ENCODE measurements at regions of chr22 and their contacts with region 1.

Region 1: GRCh38 chr22:40396882-40397281 is 26.5 kb downstream of the SGSM3 start:
- DNase-seq: peak; percentile 89 to 99
- H3K4me3 ChIP-seq: no peak overlapping the region; the same call in 1 of the 2 replicates
- H3K27ac ChIP-seq: peak overlapping the region; percentile 88
- H3K4me1 ChIP-seq: peaks cover 41% of the 10 kb centered on the region
- H3K27me3 ChIP-seq: no peaks in the 10 kb centered on the region
- CTCF ChIP-seq: no peak

Region 2: GRCh38 chr22:40368016-40368415 is 28.9 kb before region 1 on chr22:
- CTCF ChIA-PET with region 1: no interaction called
- POLR2A ChIA-PET with region 1: no interaction called
- intact Hi-C with region 1: loop called (anchors 2 kb)
- DNase-seq: no peak
- H3K4me3 ChIP-seq: no peak overlapping the region
- H3K27ac ChIP-seq: 0 out of 2 replicates have a peak overlapping the region, but pooled peaks have one; percentile 33
- H3K4me1 ChIP-seq: peaks cover 11% of the 10 kb centered on the region; the same call in 1 of the 2 replicates
- H3K27me3 ChIP-seq: no peaks in the 10 kb centered on the region
- CTCF ChIP-seq: no peak

Region 3: DNA sequence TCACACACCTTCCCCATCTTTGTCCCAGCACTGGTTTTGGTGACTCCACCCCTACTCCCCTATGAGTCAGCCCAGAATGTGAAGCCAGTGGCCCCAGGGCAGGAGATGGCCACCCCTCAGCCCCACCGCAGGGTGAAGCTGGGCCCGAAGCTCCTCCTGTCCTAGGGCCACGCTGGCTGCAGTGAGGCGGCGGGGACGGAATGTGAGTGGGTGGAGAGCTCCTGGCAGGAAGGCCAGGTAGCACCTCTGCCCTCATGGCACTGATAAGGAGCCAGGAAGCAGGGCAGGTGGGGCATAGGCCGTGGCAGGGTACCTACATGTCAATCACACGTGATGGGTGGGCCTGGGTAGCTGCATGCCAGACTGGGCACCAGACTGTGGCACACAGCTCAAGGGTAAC is 13.4 kb after region 1 on chr22:
- CTCF ChIA-PET with region 1: interaction called, 3 read pairs
- POLR2A ChIA-PET with region 1: interaction called, 17 read pairs
- intact Hi-C with region 1: no loop called
- DNase-seq: peak; percentile 67 to 81
- H3K4me3 ChIP-seq: no peak overlapping the region
- H3K27ac ChIP-seq: peak overlapping the region; percentile 22; the same call in 1 of the 2 replicates
- H3K4me1 ChIP-seq: peaks cover 13% of the 10 kb centered on the region
- H3K27me3 ChIP-seq: no peaks in the 10 kb centered on the region
- CTCF ChIP-seq: no peak

Region 4: DNA sequence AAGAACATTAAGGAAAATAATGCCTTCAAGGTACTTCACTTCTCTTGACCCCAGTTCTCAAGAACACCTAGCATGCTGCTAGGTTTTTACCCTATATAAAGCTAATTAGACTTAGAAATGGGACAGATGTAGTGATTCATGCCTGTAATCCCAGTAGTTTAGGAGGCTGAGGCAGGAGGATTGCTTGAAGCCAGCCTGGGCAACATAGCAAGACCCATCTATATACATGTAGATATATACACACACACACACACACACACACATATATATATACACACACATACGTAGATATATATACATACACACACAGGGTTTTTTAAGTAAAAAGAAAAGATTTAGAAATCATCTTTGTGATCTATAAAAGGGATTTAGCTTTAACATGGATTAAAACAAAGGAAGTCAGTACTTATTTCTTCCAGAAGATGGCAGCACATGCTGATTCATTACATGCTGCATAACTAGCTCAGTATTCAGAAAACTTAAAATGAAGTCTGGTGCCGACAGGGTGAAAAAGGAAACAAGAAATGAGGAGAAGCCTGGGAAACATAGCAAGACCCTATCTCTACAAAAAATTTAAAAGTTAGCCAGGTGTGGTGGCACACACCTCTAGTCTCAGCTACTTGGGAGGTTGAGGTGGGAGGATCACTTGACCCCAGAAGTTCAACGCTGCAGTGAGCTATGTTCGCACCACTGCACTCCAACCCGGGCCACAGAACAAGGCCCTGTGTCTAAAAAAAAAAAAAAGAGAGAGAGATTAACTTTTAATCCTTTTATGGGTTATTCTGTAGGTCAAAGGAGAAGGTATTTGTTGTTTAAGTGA is 525.8 kb after region 1 on chr22:
- CTCF ChIA-PET with region 1: interaction called, 10 read pairs
- POLR2A ChIA-PET with region 1: no interaction called
- intact Hi-C with region 1: no loop called
- DNase-seq: peak in 1 of 2 experiments; percentile 56
- H3K4me3 ChIP-seq: no peak overlapping the region
- H3K27ac ChIP-seq: no peak overlapping the region
- H3K4me1 ChIP-seq: no peaks in the 10 kb centered on the region
- H3K27me3 ChIP-seq: no peaks in the 10 kb centered on the region
- CTCF ChIP-seq: peak; percentile 89